T-cell (primary cell): ENCODE measurements at regions of chr7 and their contacts with region 1.

Region 1: DNA sequence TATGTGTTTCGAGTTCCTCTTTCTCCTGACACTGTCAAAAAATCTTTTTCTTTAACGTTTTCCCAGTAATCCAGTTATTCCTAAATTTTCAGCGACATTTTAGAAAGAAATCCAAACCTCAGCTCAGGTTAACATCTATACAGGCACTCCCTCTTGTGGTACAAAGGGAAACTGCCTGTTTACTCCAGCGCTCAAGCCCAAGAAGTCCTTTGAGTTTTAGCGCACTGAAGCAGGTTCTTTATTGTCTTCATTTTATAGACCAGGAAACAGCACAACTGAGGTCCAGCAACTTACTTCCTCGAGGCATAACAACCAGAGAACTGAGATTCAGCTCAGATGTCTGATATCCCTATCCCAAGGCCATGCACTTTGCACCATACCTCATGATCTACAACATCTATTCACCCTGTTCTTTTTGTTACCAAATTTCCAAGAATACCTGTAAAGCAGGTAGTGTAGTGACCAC is 287.2 kb upstream of the MKLN1 start:
- DNase-seq: peak in 25 of 35 experiments; percentile 25 to 81 (median 43)
- ATAC-seq: peak; percentile 47 to 73 (median 66)
- H3K4me3 ChIP-seq: no peak overlapping the region
- H3K4me3 Mint-ChIP-seq: peak overlapping the region in 2 of 3 donors; percentile 1 to 36
- H3K27ac ChIP-seq: no peak overlapping the region
- H3K27ac Mint-ChIP-seq: peak overlapping the region; percentile 53 to 60
- H3K4me1 ChIP-seq: peaks cover 0 to 19% of the 10 kb centered on the region in 2 experiments
- H3K4me1 Mint-ChIP-seq: peaks cover 76 to 78% (median 77%) of the 10 kb centered on the region in 3 donors
- H3K27me3 ChIP-seq: no peaks in the 10 kb centered on the region
- H3K27me3 Mint-ChIP-seq: no peaks in the 10 kb centered on the region

Region 2: DNA sequence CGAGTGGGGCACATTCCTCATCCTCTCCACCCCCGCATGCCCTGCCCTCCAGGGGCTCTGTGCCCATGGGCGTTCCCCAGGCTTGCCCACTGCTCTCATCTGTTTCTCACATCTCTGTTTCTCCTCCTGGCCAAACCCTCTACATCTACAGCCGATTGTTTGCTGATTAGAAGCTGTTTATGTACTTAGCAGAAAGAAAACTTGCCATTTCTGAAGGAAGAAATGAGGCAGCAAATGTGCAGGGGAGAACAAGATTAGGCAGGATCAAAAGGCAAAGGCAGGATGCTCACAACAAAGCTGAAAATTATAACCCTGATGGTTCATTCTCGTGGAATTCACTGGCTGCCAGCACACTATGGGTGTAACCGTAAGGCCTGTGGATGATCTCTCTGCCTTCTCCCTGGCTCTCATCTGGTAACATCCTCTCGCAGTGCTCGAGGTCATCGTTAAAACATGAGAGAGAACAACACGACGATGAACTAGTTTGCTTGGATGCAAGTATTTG is 194.9 kb before region 1 on chr7:
- CTCF ChIA-PET with region 1: no interaction called
- POLR2A ChIA-PET with region 1: no interaction called
- DNase-seq: no peak
- ATAC-seq: no peak
- H3K4me3 ChIP-seq: no peak overlapping the region
- H3K4me3 Mint-ChIP-seq: no peak overlapping the region
- H3K27ac ChIP-seq: no peak overlapping the region
- H3K27ac Mint-ChIP-seq: no peak overlapping the region
- H3K4me1 ChIP-seq: peaks cover 2 to 10% of the 10 kb centered on the region in 2 experiments
- H3K4me1 Mint-ChIP-seq: peaks cover 7 to 14% (median 11%) of the 10 kb centered on the region in 3 donors
- H3K27me3 ChIP-seq: peaks cover 0 to 26% of the 10 kb centered on the region in 2 experiments
- H3K27me3 Mint-ChIP-seq: peaks cover 7 to 27% of the 10 kb centered on the region in 2 donors

Region 3: GRCh38 chr7:130896898-130897514 is 143.5 kb before region 1 on chr7:
- CTCF ChIA-PET with region 1: interaction called, 7 to 78 read pairs
- POLR2A ChIA-PET with region 1: interaction called, 3 read pairs
- DNase-seq: peak; percentile 30 to 89 (median 70)
- ATAC-seq: peak; percentile 68 to 79 (median 76)
- H3K4me3 ChIP-seq: no peak overlapping the region
- H3K4me3 Mint-ChIP-seq: peak overlapping the region in 1 of 3 donors; percentile 48
- H3K27ac ChIP-seq: peak overlapping the region; percentile 19
- H3K27ac Mint-ChIP-seq: peak overlapping the region; percentile 78 to 89
- H3K4me1 ChIP-seq: peaks cover 3 to 61% of the 10 kb centered on the region in 2 experiments
- H3K4me1 Mint-ChIP-seq: peaks cover 70 to 92% (median 85%) of the 10 kb centered on the region in 3 donors
- H3K27me3 ChIP-seq: no peaks in the 10 kb centered on the region
- H3K27me3 Mint-ChIP-seq: no peaks in the 10 kb centered on the region

Region 4: GRCh38 chr7:130966246-130967009 is 74.1 kb before region 1 on chr7:
- CTCF ChIA-PET with region 1: interaction called in 1 of 2 experiments, 11 read pairs
- POLR2A ChIA-PET with region 1: no interaction called
- DNase-seq: no peak
- ATAC-seq: no peak
- H3K4me3 ChIP-seq: no peak overlapping the region
- H3K4me3 Mint-ChIP-seq: no peak overlapping the region
- H3K27ac ChIP-seq: no peak overlapping the region
- H3K27ac Mint-ChIP-seq: peak overlapping the region; percentile 47 to 56
- H3K4me1 ChIP-seq: peaks cover 11 to 35% of the 10 kb centered on the region in 2 experiments
- H3K4me1 Mint-ChIP-seq: peaks cover 60 to 71% (median 63%) of the 10 kb centered on the region in 3 donors
- H3K27me3 ChIP-seq: no peaks in the 10 kb centered on the region
- H3K27me3 Mint-ChIP-seq: no peaks in the 10 kb centered on the region

Region 5: DNA sequence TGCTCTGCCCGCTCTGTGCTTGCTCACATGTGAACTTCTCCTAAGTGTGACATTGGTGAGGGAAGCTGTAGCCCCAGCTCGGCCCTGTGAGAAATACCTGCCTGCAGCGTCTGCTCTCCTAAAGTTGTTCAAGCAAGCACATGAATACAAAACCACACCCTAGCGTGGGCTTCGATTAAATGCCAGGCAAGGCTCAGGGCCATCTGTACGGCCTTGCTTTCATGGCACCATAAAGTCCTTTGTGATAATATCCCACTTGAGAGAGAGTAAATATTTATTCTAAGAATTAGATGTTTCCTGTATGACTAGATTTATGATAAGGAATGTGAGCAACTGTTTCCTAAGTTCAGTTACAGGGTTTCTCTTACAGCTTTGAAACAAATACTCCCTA is 43.7 kb before region 1 on chr7:
- CTCF ChIA-PET with region 1: interaction called, 3 to 4 read pairs
- POLR2A ChIA-PET with region 1: interaction called in 1 of 2 experiments, 10 read pairs
- DNase-seq: no peak
- ATAC-seq: peak; percentile 24 to 58 (median 52)
- H3K4me3 ChIP-seq: no peak overlapping the region
- H3K4me3 Mint-ChIP-seq: peak overlapping the region; percentile 37 to 60 (median 59)
- H3K27ac ChIP-seq: peak overlapping the region; percentile 62
- H3K27ac Mint-ChIP-seq: peak overlapping the region; percentile 89 to 92
- H3K4me1 ChIP-seq: peaks cover 0 to 62% of the 10 kb centered on the region in 2 experiments
- H3K4me1 Mint-ChIP-seq: peaks cover 70 to 92% (median 86%) of the 10 kb centered on the region in 3 donors
- H3K27me3 ChIP-seq: no peaks in the 10 kb centered on the region
- H3K27me3 Mint-ChIP-seq: no peaks in the 10 kb centered on the region

Region 6: DNA sequence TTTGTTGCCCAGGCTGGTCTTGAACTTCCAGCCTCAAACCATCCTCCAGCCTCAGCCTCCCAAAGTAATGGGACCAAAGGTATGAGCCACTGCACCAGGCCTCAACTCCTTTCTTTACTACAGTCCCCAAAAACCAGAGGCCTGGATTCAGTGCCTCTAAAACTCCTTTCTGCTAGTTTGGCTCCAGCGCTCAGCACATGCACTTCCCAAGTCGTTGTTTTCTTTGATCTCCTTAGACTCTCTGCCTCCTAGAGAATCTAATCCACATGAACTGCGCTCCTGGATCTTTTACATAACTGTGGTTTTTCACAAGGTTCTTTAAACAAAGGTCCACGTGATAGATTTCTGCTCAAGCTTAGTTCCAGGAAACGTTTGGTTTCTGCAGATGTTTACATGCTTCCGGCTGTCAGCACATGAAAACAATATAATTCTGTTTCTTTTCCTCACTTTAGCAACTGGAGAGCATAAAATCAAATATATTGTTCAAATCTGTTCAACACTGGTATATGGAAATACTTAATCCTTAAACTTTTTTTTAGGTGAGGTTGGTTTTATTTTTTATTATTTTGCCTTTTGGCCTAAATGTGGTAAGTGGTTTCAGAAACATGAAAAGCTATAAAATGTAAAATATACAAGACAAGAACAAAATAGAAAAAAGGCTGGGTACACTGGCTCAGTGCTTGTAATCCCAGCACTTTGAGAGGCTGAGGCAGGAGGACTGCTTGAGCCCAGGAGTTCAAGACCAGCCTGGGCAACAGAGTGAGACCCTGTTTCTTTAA is 16.7 kb after region 1 on chr7:
- CTCF ChIA-PET with region 1: interaction called, 3 to 19 read pairs
- POLR2A ChIA-PET with region 1: interaction called, 7 to 9 read pairs
- DNase-seq: peak in 11 of 35 experiments; percentile 21 to 75 (median 41)
- ATAC-seq: peak; percentile 63 to 77 (median 64)
- H3K4me3 ChIP-seq: peak overlapping the region in 1 of 2 donors; percentile 12
- H3K4me3 Mint-ChIP-seq: peak overlapping the region; percentile 60 to 80 (median 63)
- H3K27ac ChIP-seq: peak overlapping the region; percentile 93
- H3K27ac Mint-ChIP-seq: peak overlapping the region; percentile 93 to 99
- H3K4me1 ChIP-seq: peaks cover 25 to 78% of the 10 kb centered on the region in 2 experiments
- H3K4me1 Mint-ChIP-seq: peaks cover 77 to 81% (median 80%) of the 10 kb centered on the region in 3 donors
- H3K27me3 ChIP-seq: no peaks in the 10 kb centered on the region
- H3K27me3 Mint-ChIP-seq: no peaks in the 10 kb centered on the region

Region 7: GRCh38 chr7:131124001-131124629 is 83.6 kb after region 1 on chr7:
- CTCF ChIA-PET with region 1: no interaction called
- POLR2A ChIA-PET with region 1: no interaction called
- DNase-seq: peak in 1 of 35 experiments; percentile 15
- ATAC-seq: peak in 1 of 4 experiments; percentile 33
- H3K4me3 ChIP-seq: no peak overlapping the region
- H3K4me3 Mint-ChIP-seq: no peak overlapping the region
- H3K27ac ChIP-seq: no peak overlapping the region
- H3K27ac Mint-ChIP-seq: no peak overlapping the region
- H3K4me1 ChIP-seq: no peaks in the 10 kb centered on the region
- H3K4me1 Mint-ChIP-seq: peaks cover 0 to 6% (median 0%) of the 10 kb centered on the region in 3 donors
- H3K27me3 ChIP-seq: no peaks in the 10 kb centered on the region
- H3K27me3 Mint-ChIP-seq: no peaks in the 10 kb centered on the region

Region 8: DNA sequence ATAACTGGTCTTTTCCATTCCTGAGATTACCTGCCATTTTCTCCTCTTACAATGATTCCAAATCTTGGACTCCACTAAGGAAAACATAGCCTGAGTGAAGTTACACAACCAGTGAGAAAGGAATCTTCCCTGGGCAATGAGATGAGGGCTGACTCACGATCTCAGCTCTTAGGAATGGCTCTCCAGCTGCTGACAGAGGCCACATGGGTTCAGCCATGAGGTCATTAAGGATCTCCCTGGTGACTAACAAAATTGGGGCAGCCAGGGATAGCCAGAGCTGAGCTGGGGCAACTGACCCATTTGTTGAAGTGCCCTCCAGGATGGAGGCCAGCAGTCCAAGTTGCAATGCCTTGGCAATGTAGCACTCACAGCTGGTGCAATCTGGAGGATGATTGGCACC is 208.5 kb after region 1 on chr7:
- CTCF ChIA-PET with region 1: no interaction called
- POLR2A ChIA-PET with region 1: no interaction called
- DNase-seq: no peak
- ATAC-seq: no peak
- H3K4me3 ChIP-seq: no peak overlapping the region
- H3K4me3 Mint-ChIP-seq: no peak overlapping the region
- H3K27ac ChIP-seq: no peak overlapping the region
- H3K27ac Mint-ChIP-seq: no peak overlapping the region
- H3K4me1 ChIP-seq: no peaks in the 10 kb centered on the region
- H3K4me1 Mint-ChIP-seq: peaks cover 0 to 6% (median 4%) of the 10 kb centered on the region in 3 donors
- H3K27me3 ChIP-seq: peaks cover 0 to 7% of the 10 kb centered on the region in 2 experiments
- H3K27me3 Mint-ChIP-seq: peaks cover 9 to 13% of the 10 kb centered on the region in 2 donors